A673 (cell line): ENCODE measurements at regions of chr7 and their contacts with region 1.

Region 1: DNA sequence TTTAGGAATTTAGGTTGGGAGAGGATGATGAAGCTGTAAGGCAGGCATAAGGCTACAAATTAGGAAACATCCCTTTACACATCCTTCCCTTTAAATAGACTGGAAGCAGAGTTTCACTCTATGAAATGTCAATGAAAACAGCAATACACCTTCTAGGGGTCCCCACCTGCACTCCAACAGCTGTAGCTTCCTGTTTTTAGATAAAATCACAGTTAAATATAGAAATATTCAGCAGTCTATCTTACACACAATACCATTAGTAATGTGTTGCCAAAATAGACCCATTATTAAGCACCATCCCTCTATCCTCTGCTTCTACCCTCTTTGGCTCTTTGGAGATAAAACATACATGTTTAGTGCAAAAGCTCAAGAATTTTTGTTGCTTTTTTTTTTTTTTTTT is 237.4 kb downstream of the PCLO start:
- DNase-seq: no peak
- H3K4me3 ChIP-seq: no peak overlapping the region
- H3K27ac ChIP-seq: no peak overlapping the region
- H3K4me1 ChIP-seq: no peaks in the 10 kb centered on the region
- H3K27me3 ChIP-seq: peaks cover 2% of the 10 kb centered on the region
- CTCF ChIP-seq: no peak

Region 2: DNA sequence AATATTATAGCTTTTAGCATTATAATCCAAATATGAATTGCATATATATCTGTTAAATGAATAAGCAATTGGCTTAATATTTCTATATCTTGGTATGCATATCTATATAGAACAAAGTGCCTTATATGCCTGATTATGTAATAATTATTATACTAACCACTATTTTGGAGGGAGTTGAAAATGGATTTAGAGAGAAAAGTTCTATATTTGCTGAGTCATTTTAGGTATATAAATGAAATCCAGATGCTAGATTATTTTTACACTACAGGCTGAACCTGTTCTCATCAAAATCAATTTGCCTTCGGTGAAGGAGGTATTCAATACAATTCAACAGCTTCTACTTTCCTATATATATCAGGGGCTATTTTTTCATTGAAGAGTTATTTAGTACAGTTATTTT is 39.0 kb before region 1 on chr7:
- CTCF ChIA-PET with region 1: no interaction called
- POLR2A ChIA-PET with region 1: no interaction called
- intact Hi-C with region 1: loop called (anchors 1 kb)
- DNase-seq: no peak
- H3K4me3 ChIP-seq: no peak overlapping the region
- H3K27ac ChIP-seq: no peak overlapping the region
- H3K4me1 ChIP-seq: no peaks in the 10 kb centered on the region
- H3K27me3 ChIP-seq: no peaks in the 10 kb centered on the region
- CTCF ChIP-seq: no peak

Region 3: DNA sequence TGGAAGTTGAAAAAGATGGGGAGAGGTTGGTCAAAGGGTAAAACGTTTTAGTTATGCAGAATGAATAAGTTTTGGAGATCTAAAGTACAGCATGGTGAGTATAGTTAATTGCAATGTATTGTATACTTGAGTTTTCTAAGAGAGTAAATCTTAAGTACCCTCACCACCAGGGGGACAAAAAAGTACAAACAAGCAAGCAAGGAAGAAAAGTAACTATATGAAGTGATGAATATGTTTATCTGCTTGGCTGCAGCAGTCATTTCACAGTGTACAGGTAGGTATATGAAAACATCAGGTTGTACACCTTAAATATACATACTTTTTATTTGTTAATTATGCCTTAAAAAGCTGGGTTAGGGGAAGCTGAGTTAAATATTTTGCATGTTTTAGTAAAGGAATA is 80.1 kb after region 1 on chr7:
- CTCF ChIA-PET with region 1: no interaction called
- POLR2A ChIA-PET with region 1: interaction called, 13 read pairs
- intact Hi-C with region 1: no loop called
- DNase-seq: peak; percentile 45
- H3K4me3 ChIP-seq: no peak overlapping the region
- H3K27ac ChIP-seq: no peak overlapping the region
- H3K4me1 ChIP-seq: no peaks in the 10 kb centered on the region
- H3K27me3 ChIP-seq: peaks cover 15% of the 10 kb centered on the region
- CTCF ChIP-seq: peak; percentile 46

Region 4: GRCh38 chr7:83486957-83487356 is 561.6 kb after region 1 on chr7:
- CTCF ChIA-PET with region 1: no interaction called
- POLR2A ChIA-PET with region 1: no interaction called
- intact Hi-C with region 1: no loop called
- DNase-seq: no peak
- H3K4me3 ChIP-seq: no peak overlapping the region
- H3K27ac ChIP-seq: no peak overlapping the region
- H3K4me1 ChIP-seq: no peaks in the 10 kb centered on the region
- H3K27me3 ChIP-seq: peaks cover 52% of the 10 kb centered on the region
- CTCF ChIP-seq: no peak